Esophagus muscularis mucosa (tissue), 4 donors: ENCODE measurements at regions of chr4 and their contacts with region 1.

Region 1: DNA sequence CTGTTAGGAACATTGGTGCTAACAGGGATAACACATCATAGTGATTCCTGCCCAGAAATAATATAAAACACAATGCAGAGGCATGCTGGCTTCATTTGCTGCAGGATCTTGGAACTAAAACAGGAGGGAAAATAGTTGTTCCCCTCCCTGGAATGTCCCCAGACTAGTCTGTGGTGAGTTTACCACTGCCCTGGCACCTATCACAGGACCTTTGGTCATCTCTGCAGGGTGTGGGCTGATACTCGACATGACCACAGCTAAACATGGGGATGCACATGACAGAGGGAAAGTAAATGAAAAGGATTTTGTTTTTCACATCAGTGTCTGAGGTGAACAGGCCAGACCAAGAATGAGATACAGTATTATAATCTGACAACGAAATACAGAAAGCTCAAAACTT is 160.2 kb upstream of the DKK2 start:
- DNase-seq: no peak
- H3K4me3 ChIP-seq: no peak overlapping the region
- H3K27ac ChIP-seq: no peak overlapping the region
- H3K4me1 ChIP-seq: no peaks in the 10 kb centered on the region
- H3K27me3 ChIP-seq: no peaks in the 10 kb centered on the region
- CTCF ChIP-seq: no peak
- EP300 ChIP-seq: no peak
- POLR2A ChIP-seq: no peak

Region 2: GRCh38 chr4:107736924-107737448 is 540.7 kb after region 1 on chr4:
- intact Hi-C with region 1: loop called (anchors 10 kb)
- DNase-seq: no peak
- H3K4me3 ChIP-seq: no peak overlapping the region
- H3K27ac ChIP-seq: no peak overlapping the region
- H3K4me1 ChIP-seq: peaks cover 10 to 19% (median 16%) of the 10 kb centered on the region in 4 donors
- H3K27me3 ChIP-seq: no peaks in the 10 kb centered on the region
- CTCF ChIP-seq: peak; percentile 66 to 87 (median 66)
- EP300 ChIP-seq: no peak
- POLR2A ChIP-seq: no peak